Astrocyte of the cerebellum (primary cell): ENCODE measurements at regions of chr6 and their contacts with region 1.

Region 1: GRCh38 chr6:10694302-10695085 is at the starts of genes C6orf52 and PAK1IP1:
- DNase-seq: peak; percentile 85
- H3K4me3 ChIP-seq: peak within 1 kb of the TSS; percentile 96
- CTCF ChIP-seq: no peak

Region 2: DNA sequence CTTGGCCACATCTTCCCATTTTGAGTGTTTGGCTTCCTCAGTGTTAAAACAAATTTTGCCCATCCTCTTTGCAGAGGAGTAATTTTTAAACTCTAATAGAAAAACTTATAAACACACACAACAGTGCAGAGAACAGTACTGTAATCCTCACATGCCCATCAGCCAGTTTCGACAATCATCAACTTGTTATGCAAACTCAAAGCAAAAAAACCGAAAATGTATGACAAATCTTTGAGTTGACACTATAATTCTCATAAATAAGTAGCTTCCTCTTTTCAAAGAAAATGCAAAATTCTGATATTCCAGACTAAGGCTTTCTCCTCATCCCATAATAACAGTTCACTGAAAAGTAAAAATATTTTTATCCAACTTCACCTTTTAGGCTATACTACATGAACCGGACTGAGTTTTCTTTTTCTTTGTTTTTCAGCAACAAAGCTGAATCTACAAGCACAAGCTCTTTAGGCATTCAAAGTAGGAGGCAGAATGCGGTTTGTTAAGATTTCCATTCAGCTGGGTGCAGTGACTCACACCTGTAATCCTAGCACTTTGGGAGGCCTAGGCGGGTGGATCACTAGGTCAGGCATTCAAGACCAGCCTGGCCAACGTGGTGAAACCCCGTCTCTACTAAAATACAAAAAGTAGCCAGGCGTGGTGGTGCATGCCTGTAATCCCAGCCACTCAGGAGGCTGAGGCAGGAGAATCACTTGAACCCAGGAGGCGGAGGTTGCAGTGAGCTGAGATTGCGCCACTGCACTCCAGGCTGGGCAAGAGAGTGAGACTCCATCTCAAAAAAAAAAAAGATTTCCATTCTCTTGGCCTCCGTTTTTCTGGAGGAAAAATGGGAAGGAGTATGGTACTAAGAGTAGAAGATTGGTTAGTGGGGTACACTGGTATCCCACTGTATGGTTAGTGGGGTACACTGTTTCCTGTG is 98.5 kb before region 1 on chr6:
- in situ Hi-C with region 1: loop called (anchors 25 kb)
- DNase-seq: no peak
- H3K4me3 ChIP-seq: no peak overlapping the region
- CTCF ChIP-seq: no peak